PC-9 (cell line): ENCODE measurements at regions of chr5 and their contacts with region 1.

Region 1: DNA sequence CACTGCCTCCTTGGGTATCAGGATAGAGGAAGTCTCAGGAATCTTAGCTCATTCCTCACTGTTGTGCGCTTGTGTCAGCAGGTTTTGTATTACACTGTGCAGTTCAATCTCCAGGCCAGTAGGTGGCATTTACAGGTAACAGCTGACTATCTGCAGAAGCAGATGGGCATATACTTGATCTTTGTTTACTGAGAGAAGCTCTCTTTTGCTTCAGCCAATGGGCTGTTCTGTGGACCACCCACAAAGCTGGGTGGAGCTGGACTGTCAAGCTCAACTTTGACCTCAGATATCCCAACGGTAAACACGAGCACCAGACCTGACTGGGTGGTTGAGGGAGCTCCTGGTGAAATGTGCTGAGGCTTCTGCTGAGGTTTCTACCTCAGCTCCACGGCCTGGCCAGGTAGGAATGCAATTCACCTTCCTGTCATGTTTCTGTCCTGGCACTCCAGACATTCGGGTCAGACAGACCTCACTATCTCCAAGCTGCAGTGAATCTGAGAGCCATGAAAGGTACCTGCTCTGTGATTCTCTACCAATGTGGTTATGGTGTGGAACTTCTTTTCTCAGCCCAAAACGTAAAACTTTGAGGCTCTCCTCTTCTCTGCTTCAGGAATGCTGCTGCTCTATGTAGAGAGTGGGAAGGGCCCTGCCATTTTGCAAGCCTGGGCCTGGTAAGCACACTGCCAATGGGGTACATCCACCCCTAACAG is 167.9 kb upstream of the ACTBL2 start:
- DNase-seq: peak in 1 of 2 experiments; percentile 70
- H3K4me3 ChIP-seq: no peak overlapping the region
- H3K27ac ChIP-seq: no peak overlapping the region
- H3K4me1 ChIP-seq: no peaks in the 10 kb centered on the region
- H3K27me3 ChIP-seq: no peaks in the 10 kb centered on the region
- CTCF ChIP-seq: peak; percentile 59

Region 2: DNA sequence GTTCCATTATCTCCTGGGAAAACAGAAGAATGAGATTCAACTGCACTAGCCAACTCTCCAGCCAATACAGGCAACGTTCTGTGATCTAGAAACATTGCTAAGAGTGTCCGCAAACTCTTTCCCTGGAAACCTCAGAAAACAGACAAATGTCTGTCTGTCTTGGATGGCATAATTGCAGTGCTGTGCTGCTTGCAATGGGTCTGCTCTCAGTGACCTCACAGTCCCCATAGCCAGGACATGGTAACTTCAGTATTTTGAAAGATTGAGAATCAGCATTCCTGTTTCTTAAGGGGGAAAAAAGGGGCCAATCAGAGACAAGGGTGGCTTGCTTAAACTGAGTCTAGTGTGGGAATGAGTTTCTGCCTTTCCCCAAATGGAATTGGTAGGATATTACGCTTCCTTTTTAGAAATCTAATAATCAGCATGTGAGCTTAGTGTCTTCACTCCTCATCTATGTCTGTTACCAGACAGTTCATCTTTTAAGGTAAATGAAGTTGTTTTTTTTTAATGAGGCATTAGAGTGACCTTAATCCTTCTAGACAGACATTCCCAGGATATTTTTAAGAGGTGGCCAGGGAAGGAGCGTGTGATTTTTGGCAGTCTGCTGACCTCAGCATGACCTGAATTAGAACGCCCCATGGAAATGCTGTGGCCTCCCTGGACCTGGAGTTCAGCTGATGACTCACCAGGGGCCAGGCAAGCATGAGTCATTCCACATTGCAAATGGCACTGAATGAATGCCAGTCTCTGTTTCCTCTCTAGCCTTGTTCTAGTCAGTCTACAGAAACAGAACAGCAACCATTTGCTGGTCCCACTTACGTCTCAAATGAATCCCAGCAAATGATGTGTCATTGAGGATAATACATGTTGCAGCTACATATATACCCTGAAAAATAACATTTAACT is 42.3 kb after region 1 on chr5:
- CTCF ChIA-PET with region 1: no interaction called
- POLR2A ChIA-PET with region 1: no interaction called
- intact Hi-C with region 1: loop called (anchors 1 kb)
- DNase-seq: peak; percentile 83 to 86
- H3K4me3 ChIP-seq: no peak overlapping the region; the same call in 1 of the 2 replicates
- H3K27ac ChIP-seq: peak overlapping the region; percentile 91
- H3K4me1 ChIP-seq: peaks cover 25% of the 10 kb centered on the region
- H3K27me3 ChIP-seq: no peaks in the 10 kb centered on the region
- CTCF ChIP-seq: no peak

Region 3: GRCh38 chr5:57736716-57737115 is 86.2 kb after region 1 on chr5:
- CTCF ChIA-PET with region 1: interaction called, 11 read pairs
- POLR2A ChIA-PET with region 1: no interaction called
- intact Hi-C with region 1: loop called (anchors 1 kb)
- DNase-seq: no peak
- H3K4me3 ChIP-seq: no peak overlapping the region
- H3K27ac ChIP-seq: peak overlapping the region; percentile 92
- H3K4me1 ChIP-seq: peaks cover 49% of the 10 kb centered on the region
- H3K27me3 ChIP-seq: no peaks in the 10 kb centered on the region
- CTCF ChIP-seq: no peak

Region 4: GRCh38 chr5:57754616-57755015 is 104.1 kb after region 1 on chr5:
- CTCF ChIA-PET with region 1: no interaction called
- POLR2A ChIA-PET with region 1: no interaction called
- intact Hi-C with region 1: no loop called
- DNase-seq: no peak
- H3K4me3 ChIP-seq: no peak overlapping the region
- H3K27ac ChIP-seq: no peak overlapping the region
- H3K4me1 ChIP-seq: no peaks in the 10 kb centered on the region
- H3K27me3 ChIP-seq: no peaks in the 10 kb centered on the region
- CTCF ChIP-seq: no peak

Region 5: DNA sequence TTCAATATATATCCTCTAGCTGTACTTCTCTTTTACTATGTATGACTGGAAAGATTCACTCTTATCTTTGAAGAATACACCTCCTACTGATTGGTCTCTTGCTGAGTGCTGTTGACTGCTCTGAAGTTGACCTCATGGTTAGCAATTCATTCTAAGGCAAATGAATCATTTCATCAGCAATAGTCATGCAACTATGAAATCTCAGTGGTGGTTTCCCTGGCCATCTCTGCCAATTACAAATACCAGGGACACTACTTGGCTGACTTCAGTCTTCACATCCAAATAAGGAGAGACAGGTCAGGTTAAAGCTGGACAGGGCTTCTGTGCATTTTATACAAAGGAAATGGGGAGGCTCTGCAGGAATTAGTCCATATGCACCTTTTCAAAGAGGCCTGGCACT is 165.6 kb after region 1 on chr5:
- CTCF ChIA-PET with region 1: interaction called, 3 read pairs
- POLR2A ChIA-PET with region 1: no interaction called
- intact Hi-C with region 1: loop called (anchors 2 kb)
- DNase-seq: peak; percentile 51 to 81
- H3K4me3 ChIP-seq: no peak overlapping the region
- H3K27ac ChIP-seq: peak overlapping the region; percentile 73
- H3K4me1 ChIP-seq: peaks cover 22% of the 10 kb centered on the region
- H3K27me3 ChIP-seq: no peaks in the 10 kb centered on the region
- CTCF ChIP-seq: no peak

Region 6: DNA sequence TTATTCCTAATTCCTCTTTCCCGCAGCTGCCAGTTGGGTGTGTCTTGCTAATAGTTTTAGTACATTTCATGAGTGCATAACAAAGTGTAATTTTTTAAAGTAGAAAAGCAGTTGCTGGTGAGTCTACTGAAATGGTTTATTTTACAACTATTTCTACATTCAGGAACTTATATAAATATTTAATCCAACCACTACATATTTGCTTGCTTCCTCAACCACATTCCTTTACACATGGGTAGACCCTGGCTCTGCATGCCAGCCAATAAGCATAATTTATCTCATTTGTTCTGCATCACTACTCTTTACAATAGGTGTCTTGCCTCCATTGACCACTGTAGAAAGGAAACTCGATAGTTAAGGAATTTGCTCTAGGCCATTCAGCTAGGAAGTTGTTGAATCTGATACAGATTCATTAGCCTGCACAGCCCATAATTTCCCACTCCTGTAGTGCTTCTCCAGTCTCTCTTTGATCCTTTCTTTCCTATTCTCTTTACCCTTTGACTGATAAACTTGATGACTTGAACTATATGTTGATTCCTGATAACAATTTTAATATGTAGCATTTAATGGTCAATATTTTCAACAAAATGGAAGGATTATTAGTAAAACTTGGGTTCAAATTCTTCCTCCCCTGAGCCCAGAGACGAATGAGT is 174.6 kb after region 1 on chr5:
- CTCF ChIA-PET with region 1: interaction called, 3 read pairs
- POLR2A ChIA-PET with region 1: interaction called, 4 read pairs
- intact Hi-C with region 1: loop called (anchors 2 kb)
- DNase-seq: peak; percentile 63 to 99
- H3K4me3 ChIP-seq: no peak overlapping the region
- H3K27ac ChIP-seq: peak overlapping the region; percentile 97
- H3K4me1 ChIP-seq: peaks cover 39% of the 10 kb centered on the region
- H3K27me3 ChIP-seq: no peaks in the 10 kb centered on the region
- CTCF ChIP-seq: no peak

Region 7: DNA sequence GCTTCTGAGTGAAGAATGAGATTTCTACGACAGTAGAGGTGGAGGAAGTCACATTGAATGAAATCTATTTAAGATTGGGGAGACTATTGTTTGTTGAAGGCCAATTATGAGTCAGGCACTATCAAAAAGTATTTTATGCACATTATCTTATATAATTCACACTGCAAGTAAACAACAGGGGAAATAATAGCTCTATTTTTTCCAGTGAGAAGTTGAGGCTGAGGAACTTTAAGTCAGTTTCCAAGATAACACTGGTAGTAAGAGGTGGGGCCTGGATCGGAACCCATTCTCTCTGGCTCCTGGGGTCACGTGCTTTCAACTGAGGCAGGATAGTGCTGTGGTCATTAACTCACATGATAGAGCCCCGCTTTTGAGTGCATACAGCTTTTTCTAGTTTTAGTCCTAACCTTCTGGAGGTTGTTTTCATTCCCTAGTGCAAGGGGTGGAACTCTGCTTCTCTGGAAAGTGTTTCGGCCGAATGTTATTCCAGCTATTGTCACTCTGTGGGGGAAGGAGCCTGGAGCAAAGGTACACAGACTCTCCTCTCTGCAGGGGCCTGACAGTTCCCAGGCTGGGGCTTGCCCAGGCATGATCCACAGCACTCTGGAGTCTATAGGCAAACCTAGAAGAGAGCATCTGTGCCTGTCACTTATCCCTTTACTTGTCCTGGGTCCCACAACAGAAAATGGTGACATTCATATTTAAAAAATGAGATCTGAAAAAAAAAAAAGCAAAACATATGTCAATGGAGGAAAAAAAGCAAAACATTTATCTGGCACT is 184.5 kb after region 1 on chr5:
- CTCF ChIA-PET with region 1: interaction called, 4 read pairs
- POLR2A ChIA-PET with region 1: interaction called, 4 read pairs
- intact Hi-C with region 1: loop called (anchors 1 kb)
- DNase-seq: no peak
- H3K4me3 ChIP-seq: no peak overlapping the region
- H3K27ac ChIP-seq: no peak overlapping the region
- H3K4me1 ChIP-seq: peaks cover 30% of the 10 kb centered on the region
- H3K27me3 ChIP-seq: no peaks in the 10 kb centered on the region
- CTCF ChIP-seq: no peak

Region 8: GRCh38 chr5:58071566-58071965 is 421.1 kb after region 1 on chr5:
- CTCF ChIA-PET with region 1: no interaction called
- POLR2A ChIA-PET with region 1: no interaction called
- intact Hi-C with region 1: no loop called
- DNase-seq: no peak
- H3K4me3 ChIP-seq: no peak overlapping the region
- H3K27ac ChIP-seq: no peak overlapping the region
- H3K4me1 ChIP-seq: peaks cover 23% of the 10 kb centered on the region
- H3K27me3 ChIP-seq: no peaks in the 10 kb centered on the region
- CTCF ChIP-seq: no peak